ENCODE measurements at regions of chr10 and their contacts with region 1.

Region 1: DNA sequence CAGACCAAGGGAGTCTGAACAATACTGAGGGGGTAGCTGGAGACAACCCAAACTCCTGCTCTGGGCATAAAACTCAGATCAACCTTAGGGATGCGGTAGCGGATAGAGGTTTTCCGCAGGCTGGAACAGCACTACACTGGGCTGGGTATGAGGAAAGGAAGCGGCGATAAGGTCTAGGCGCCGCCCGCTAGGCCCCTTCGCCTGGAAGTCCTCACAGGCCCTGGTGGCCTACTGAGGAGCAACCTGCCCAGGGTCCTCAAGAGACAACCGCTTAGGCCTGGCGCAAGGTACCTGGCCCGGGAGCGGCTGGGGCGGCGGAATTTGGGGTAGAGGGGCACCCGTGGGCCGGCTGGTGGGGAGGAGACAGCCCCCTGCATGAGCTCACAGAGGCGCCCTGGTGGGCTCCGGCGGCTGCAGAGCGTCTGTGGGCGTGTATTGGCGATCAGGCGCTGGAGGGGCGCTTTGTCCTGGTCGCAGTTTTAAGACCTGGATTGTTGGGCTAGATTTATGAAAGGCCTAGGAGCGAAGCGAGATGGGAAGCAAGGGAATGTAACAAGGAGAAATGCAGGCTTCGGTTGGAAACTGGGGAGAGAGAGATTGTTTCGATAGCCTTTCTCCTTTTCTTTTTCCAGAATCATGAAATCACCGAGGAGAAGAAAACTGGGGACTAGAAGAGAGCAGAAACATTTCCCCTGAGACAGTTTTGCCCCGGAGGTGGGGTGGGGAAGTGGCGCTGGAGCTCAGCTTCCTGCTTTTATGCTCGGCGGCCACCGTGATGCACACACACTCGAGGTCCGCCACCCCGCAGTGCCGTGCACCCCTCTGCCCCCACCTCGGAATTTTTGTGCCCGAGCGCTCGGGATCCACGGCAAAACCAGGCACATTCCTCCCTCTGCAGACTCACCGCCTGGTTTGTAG is 2.4 kb upstream of the NKX2-3 start:
- DNase-seq: no peak
- H3K4me3 ChIP-seq: peak overlapping the region in 1 of 3 donors; percentile 5
- H3K27ac ChIP-seq: no peak overlapping the region
- H3K4me1 ChIP-seq: peaks cover 0 to 8% of the 10 kb centered on the region in 2 donors
- H3K27me3 ChIP-seq: peaks cover 19 to 100% of the 10 kb centered on the region in 2 donors
- CTCF ChIP-seq: no peak
- POLR2A ChIP-seq: no peak

Region 2: DNA sequence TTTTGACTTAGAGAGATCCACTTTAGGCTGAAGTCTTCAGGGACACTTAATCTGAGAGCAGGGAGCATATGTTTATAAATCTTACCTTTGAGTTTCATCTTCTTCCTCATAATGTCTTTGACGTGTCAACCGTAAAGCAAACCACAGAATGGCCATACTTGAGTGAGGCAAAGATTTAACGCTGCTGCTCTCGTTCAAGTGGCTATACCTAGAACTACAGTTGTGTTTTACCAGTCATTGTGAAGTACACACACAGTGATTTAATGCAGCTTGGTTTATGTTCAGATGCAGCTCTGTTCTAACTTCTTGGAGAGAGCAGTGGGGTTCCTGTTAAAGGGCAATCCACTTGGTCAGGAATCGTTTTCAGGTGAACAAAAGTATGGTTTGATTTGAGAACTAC is 60.0 kb before region 1 on chr10:
- intact Hi-C with region 1: loop called (anchors 2 kb)
- DNase-seq: no peak
- H3K4me3 ChIP-seq: no peak overlapping the region
- H3K27ac ChIP-seq: no peak overlapping the region
- H3K4me1 ChIP-seq: no peaks in the 10 kb centered on the region
- H3K27me3 ChIP-seq: peaks cover 0 to 23% of the 10 kb centered on the region in 2 donors
- CTCF ChIP-seq: no peak
- POLR2A ChIP-seq: no peak

Region 3: DNA sequence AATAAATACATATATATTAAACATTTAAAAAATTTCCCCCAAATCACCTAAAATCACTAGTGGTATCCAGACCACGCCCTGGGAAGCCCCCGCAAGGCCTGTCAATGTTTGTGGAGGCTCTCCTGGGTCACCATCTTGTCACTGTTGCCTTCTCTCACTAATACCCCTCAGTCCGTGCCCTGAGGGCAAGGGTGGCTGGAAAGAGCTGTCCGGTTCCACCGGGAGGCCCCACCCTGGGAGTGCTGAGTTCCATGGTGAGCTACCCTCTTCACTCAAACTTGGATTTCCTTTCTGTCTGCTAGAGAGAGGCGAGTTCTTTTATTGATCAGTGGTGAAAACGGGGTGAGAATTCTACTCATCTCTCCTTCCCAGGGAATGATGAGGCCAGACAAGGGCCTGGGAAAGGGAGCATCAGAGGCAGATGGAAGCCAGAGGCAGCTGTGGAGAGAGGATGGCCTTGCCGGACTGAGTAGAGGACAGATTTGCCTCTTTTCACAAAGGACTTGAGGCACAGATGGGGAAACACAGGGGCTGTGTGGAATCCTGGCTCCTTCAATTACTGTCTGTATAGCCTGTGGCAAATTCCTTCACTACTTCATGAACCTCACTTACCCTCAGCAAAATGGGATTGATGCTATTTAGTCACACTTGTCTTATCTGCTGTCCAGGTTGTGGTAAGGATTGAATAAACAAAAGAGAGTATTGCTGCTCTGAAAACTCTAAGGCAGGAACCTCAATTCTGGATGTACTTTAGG is 49.4 kb after region 1 on chr10:
- intact Hi-C with region 1: loop called (anchors 2 kb)
- DNase-seq: no peak
- H3K4me3 ChIP-seq: no peak overlapping the region
- H3K27ac ChIP-seq: no peak overlapping the region
- H3K4me1 ChIP-seq: no peaks in the 10 kb centered on the region
- H3K27me3 ChIP-seq: no peaks in the 10 kb centered on the region
- CTCF ChIP-seq: no peak
- POLR2A ChIP-seq: no peak

Measured in breast epithelium (tissue), 4 donors.